A673 (cell line): ENCODE measurements at regions of chr12 and their contacts with region 1.

Region 1: DNA sequence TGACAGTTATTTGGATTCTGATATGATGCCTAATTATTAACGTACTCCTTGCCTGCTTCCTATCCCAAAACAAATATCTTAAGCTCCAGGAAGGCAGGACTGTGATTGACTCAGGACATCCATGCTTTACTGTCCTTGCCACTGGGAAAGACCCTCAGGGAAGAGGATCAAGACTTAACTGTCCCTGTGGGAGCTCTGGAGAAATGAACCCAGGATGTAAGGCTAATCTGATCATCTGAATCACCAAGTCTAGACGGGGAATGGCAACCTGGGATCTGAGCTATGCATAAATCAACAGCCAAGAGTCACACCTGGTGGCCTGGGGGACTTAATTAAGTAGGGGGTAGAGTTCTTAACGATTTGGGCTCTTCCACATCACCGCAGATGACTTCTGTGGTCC is 153.2 kb upstream of the BCL2L14 start:
- DNase-seq: no peak
- H3K4me3 ChIP-seq: no peak overlapping the region
- H3K27ac ChIP-seq: no peak overlapping the region
- H3K4me1 ChIP-seq: no peaks in the 10 kb centered on the region
- H3K27me3 ChIP-seq: no peaks in the 10 kb centered on the region
- CTCF ChIP-seq: no peak

Region 2: DNA sequence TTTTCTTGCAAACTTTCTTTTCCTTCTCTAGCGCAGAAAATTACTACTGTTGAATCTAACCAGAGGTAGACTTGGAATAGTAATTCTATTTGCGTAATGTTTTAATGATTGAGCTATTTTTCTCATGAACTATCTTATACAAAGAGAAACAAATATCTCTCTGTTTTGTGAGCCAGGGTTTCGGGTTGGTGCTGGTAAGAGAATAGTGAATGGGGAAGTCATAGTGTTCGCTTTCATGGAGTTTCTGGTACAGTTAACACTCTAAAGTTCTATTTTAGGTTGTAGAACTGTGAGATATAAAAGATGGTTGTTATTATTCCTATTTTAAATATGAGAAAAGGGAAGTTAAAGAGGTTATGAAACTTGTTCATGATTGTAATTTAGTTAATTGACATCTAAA is 1925.2 kb before region 1 on chr12:
- CTCF ChIA-PET with region 1: no interaction called
- POLR2A ChIA-PET with region 1: no interaction called
- intact Hi-C with region 1: no loop called
- DNase-seq: no peak
- H3K4me3 ChIP-seq: no peak overlapping the region
- H3K27ac ChIP-seq: no peak overlapping the region
- H3K4me1 ChIP-seq: no peaks in the 10 kb centered on the region
- H3K27me3 ChIP-seq: peaks cover 42% of the 10 kb centered on the region
- CTCF ChIP-seq: no peak

Region 3: GRCh38 chr12:12244341-12244740 is 326.8 kb after region 1 on chr12:
- CTCF ChIA-PET with region 1: no interaction called
- POLR2A ChIA-PET with region 1: no interaction called
- intact Hi-C with region 1: no loop called
- DNase-seq: no peak
- H3K4me3 ChIP-seq: peak overlapping the region; percentile 29
- H3K27ac ChIP-seq: peak overlapping the region; percentile 75
- H3K4me1 ChIP-seq: peaks cover 60% of the 10 kb centered on the region
- H3K27me3 ChIP-seq: no peaks in the 10 kb centered on the region
- CTCF ChIP-seq: no peak

Region 4: GRCh38 chr12:12736759-12737676 is 819.5 kb after region 1 on chr12:
- CTCF ChIA-PET with region 1: interaction called, 10 read pairs
- POLR2A ChIA-PET with region 1: no interaction called
- intact Hi-C with region 1: no loop called
- DNase-seq: peak; percentile 59
- H3K4me3 ChIP-seq: no peak overlapping the region
- H3K27ac ChIP-seq: no peak overlapping the region
- H3K4me1 ChIP-seq: peaks cover 21% of the 10 kb centered on the region
- H3K27me3 ChIP-seq: no peaks in the 10 kb centered on the region
- CTCF ChIP-seq: peak; percentile 69